Sigmoid colon (tissue), 7 donors: ENCODE measurements at regions of chr2 and their contacts with region 1.

Region 1: DNA sequence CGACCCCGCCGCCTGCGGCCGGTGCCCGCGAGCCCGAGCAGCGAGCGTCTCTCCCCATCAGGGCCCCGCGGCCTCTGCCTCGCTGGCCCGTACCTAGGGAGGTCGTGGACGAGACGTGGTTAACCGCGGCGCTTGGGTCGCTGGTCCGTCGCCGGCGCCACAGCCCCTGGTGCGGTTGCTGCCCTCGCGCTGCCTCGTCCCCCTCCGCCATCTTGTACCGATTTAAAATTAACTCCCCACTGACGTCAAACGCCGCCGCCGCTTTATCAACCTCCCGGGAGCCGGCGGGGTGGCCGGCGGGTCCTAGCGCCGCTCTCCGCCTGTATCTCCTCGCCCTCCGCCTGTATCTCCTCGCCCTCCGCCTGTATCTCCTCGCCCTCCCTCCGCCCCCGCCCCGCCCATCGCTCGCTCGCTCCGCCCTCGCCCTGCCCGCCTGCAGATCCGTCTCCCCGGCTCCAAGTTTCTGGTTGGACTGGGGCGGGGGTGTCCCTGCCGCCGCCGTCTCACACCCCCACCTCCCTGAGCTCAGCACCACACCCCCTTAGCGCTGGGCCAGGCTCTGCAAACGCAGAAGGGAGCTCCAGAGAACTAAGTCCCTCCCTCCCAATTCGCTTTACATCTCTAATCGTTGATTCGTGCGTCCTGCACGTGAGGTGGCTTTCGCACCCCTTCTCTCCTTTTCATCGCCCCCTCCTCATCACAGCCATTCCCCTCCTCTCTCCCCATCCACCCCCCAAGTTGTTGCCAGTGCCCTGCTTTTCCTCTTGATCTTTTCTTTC is at the start of gene ATL2:
- DNase-seq: peak; percentile 98
- H3K4me3 ChIP-seq: peak within 1 kb of the TSS; percentile 80 to 98 (median 92)
- H3K27ac ChIP-seq: peak within 1 kb of the TSS; percentile 98 to 99 (median 99)
- H3K4me1 ChIP-seq: peaks cover 0 to 44% (median 27%) of the 10 kb centered on the region in 4 donors
- H3K27me3 ChIP-seq: no peaks in the 10 kb centered on the region
- CTCF ChIP-seq: no peak
- EP300 ChIP-seq: peak; percentile 13 to 76 (median 26)
- POLR2A ChIP-seq: peak; percentile 89 to 90
- total RNA-seq, gene ATL2: 176 to 271 (median 205) TPM

Region 2: GRCh38 chr2:37672104-37672869 is 705.0 kb before region 1 on chr2:
- intact Hi-C with region 1: no loop called
- DNase-seq: peak; percentile 82
- H3K4me3 ChIP-seq: peak overlapping the region; percentile 83 to 97 (median 94)
- H3K27ac ChIP-seq: peak overlapping the region; percentile 93 to 99 (median 96)
- H3K4me1 ChIP-seq: peaks cover 0 to 40% (median 16%) of the 10 kb centered on the region in 4 donors
- H3K27me3 ChIP-seq: no peaks in the 10 kb centered on the region
- CTCF ChIP-seq: no peak
- EP300 ChIP-seq: peak in 1 of 4 donors; percentile 4
- POLR2A ChIP-seq: peak; percentile 24 to 25

Region 3: DNA sequence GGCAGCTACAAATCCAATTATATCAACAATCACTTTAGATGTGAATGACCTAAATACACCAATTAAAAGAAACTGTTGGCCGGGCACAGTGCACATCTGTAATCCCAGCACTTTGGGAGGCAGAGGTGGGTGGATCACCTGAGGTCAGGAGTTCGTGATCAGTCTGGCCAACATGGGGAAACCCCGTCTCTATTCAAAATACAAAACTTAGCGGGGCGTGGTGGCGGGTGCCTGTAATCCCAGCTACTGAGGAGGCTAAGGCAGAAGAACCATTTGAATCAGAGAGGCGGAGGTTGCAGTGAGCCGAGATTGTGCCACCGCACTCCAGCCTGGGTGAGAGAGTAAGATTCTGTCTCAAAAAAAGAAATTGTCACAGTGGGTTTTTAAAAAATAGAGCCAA is 49.7 kb before region 1 on chr2:
- intact Hi-C with region 1: no loop called
- DNase-seq: no peak
- H3K4me3 ChIP-seq: no peak overlapping the region
- H3K27ac ChIP-seq: no peak overlapping the region
- H3K4me1 ChIP-seq: peaks cover 0 to 40% (median 17%) of the 10 kb centered on the region in 4 donors
- H3K27me3 ChIP-seq: no peaks in the 10 kb centered on the region
- CTCF ChIP-seq: no peak
- EP300 ChIP-seq: no peak
- POLR2A ChIP-seq: no peak

Region 4: GRCh38 chr2:38508311-38509039 is 131.2 kb after region 1 on chr2:
- intact Hi-C with region 1: loop called (anchors 5 kb)
- DNase-seq: peak; percentile 95
- H3K4me3 ChIP-seq: no peak overlapping the region
- H3K27ac ChIP-seq: peak overlapping the region; percentile 76 to 93 (median 80)
- H3K4me1 ChIP-seq: peaks cover 0 to 63% (median 46%) of the 10 kb centered on the region in 4 donors
- H3K27me3 ChIP-seq: no peaks in the 10 kb centered on the region
- CTCF ChIP-seq: no peak
- EP300 ChIP-seq: no peak
- POLR2A ChIP-seq: no peak

Region 5: GRCh38 chr2:39008665-39009064 is 631.4 kb after region 1 on chr2:
- intact Hi-C with region 1: no loop called
- DNase-seq: no peak
- H3K4me3 ChIP-seq: no peak overlapping the region
- H3K27ac ChIP-seq: no peak overlapping the region
- H3K4me1 ChIP-seq: no peaks in the 10 kb centered on the region
- H3K27me3 ChIP-seq: no peaks in the 10 kb centered on the region
- CTCF ChIP-seq: no peak
- EP300 ChIP-seq: no peak
- POLR2A ChIP-seq: no peak